ENCODE measurements at regions of chr19 and their contacts with region 1.

Region 1: GRCh38 chr19:4732680-4733114 is 9.1 kb upstream of the DPP9 start:
- DNase-seq: peak; percentile 77
- H3K27ac ChIP-seq: no peak overlapping the region
- CTCF ChIP-seq: peak; percentile 85

Region 2: DNA sequence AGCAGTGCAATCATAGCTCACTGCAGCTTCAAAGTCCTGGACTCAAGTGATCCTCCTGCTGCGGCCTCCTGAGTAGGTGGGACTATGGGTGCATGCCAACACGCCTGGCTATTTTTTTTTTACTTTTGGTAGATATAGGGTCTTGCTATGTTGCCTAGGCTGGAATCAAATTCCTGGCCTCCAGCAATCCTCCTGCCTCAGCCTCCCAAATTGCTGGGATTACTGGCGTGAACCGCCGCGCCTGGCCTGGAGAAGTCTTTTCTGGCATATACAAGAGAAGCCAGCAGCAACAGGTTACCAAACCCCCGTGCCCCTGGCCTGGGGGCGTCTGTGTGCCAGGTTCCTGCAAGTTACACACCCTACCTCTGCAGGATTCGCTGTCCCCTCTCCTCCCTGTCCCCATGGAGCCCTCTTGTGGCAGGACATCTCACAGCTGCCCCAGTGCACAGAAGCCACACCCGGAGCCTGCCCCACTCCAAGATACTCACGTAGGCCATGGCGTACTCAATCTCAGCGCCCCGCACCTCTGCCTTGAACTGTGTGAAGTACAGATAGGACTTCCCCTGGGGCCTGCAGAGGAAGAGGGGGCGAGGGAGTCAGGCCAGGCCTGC is 72.4 kb before region 1 on chr19:
- CTCF ChIA-PET with region 1: no interaction called
- POLR2A ChIA-PET with region 1: no interaction called
- DNase-seq: no peak
- H3K27ac ChIP-seq: peak overlapping the region; percentile 48
- CTCF ChIP-seq: peak; percentile 24; the same call in 1 of the 2 replicates

Region 3: DNA sequence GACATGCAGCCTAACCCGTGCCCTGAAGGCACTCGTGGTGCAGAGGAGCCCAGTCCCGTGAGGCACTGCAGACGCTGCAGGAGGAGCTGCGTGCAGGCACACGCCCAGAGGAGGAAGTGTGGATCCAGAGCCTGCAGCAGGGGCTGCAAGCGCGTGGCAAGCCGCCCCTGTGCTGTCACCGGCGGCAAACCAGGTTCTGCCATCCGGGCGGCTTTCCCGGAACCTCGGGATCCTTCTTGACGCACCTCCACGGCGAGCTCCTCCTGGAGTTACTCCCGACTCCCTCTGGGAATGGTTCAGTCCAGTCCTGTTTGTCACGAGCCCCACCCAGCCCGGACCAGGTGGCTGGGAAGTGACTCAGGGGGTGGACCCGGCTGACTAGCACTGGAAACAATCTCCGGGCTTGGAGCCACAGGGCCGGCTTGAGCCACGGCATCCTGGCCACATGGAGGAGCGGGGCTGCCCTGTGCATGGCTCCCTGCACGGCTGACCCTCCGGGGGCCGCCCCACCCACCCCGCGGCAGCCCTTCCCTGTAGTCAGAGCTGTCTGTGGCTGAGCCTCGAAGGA is 19.2 kb before region 1 on chr19:
- CTCF ChIA-PET with region 1: no interaction called
- POLR2A ChIA-PET with region 1: no interaction called
- DNase-seq: peak; percentile 99
- H3K27ac ChIP-seq: peak overlapping the region; percentile 100
- CTCF ChIP-seq: no peak

Region 4: DNA sequence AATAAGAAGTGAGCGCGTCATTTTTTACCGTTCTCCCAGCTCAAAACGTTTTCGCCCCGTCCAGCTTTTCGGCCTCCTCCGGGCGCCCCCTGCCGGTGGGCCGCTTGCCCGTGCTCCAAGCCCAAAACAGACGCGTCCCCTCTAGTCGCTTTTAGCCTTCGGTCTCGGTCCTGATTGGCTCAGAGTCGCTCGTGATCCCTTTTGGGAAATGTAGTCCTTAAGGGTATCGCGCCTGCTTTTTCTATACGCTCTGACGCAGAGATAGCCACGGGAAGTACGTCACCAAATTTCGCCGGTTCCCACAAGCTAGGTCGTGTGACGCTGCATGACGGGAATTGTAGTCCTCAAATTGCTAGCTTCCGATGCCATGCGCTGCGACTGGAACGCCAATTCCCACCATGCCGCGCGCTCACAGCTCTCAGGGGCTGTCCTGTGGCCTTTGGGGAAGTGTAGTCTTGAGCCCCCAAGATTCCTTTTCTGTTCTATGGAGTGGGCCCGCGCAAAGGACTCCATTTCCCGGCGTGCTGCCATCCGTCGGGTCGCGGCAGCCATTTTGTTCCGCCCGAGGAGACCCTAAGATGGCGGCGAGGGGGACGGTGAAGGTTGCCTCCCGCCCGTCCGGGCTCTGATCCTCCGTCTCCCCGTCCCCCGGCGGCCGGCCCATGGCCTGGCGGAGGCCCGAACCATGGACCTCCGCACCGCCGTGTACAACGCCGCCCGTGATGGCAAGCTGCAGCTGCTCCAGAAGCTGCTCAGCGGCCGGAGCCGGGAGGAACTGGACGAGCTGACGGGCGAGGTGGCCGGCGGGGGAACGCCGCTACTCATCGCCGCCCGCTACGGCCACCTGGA is 58.7 kb after region 1 on chr19 and contains the start of gene FEM1A:
- CTCF ChIA-PET with region 1: interaction called, 11 read pairs
- POLR2A ChIA-PET with region 1: no interaction called
- DNase-seq: peak; percentile 97
- H3K27ac ChIP-seq: peak within 1 kb of the TSS; percentile 89
- CTCF ChIP-seq: peak; percentile 98

Region 5: DNA sequence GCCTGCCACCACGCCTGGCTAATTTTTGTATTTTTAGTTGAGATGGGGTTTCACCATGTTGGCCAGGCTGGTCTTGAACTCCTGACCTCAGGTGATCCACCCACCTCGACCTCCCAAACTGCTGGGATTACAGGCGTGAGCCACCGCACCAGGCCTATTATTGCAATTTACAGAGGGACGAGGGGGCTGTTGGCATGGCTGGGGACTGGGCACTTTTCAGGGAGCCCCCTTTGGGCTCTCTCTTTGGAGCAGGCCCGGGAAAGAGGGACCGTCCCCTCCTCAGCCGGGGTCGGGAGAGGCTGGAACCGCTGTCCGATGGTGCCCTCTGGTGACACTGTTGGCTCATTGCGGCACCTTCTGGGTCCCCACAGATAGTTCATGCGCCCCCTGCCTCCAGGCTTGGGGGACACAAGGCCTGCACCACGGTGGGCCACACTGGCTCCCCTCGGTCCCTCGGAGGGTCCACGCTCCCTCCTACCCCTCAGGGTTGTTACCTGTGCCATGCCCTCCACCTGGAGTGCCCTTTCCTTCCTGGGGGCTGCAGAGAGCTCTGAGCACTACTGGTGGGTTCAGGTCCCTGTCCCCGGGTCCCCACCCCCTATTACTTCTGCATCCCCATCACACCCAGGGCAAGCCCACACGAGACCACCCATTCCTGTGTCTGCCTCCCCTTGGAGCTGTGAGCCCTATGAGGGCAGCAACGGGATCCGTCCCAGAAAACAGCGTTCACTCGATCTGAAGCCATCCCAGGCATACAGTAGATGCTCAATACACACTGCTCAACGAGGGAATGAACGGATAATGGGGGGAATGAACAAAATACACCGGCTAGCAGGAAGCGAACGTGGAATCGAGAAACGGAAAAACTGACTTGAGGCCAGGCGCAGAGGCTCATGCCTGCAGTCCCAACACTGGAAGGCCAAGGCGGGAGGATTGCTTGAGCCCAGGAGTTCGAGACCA is 71.3 kb after region 1 on chr19:
- CTCF ChIA-PET with region 1: interaction called, 19 read pairs
- POLR2A ChIA-PET with region 1: no interaction called
- DNase-seq: peak; percentile 46
- H3K27ac ChIP-seq: no peak overlapping the region
- CTCF ChIP-seq: peak; percentile 86

Region 6: GRCh38 chr19:5417495-5418436 is 685.1 kb after region 1 on chr19:
- CTCF ChIA-PET with region 1: no interaction called
- POLR2A ChIA-PET with region 1: no interaction called
- DNase-seq: no peak
- H3K27ac ChIP-seq: no peak overlapping the region
- CTCF ChIP-seq: no peak

Measured in RWPE1 (cell line).